ENCODE measurements at regions of chr6 and their contacts with region 1.

Region 1: DNA sequence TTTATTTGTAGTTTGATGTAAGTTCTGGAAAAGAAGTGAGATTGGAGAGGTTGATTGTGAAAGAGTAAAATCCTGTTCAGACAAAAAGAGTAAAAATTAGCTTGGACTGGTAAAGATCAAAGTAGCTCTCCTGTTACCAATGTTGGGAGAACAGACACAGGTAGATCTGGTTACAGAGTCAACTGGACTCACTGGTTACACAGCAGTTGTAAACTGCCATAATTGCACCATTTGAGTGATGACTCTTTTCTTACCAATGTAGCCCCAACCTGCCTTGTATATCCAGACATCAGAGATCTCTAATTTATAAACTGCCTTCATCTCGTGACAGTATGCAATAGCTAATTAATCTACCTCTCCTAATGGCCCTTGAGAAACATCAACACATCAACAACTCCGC is 165.6 kb upstream of the PRSS16 start:
- DNase-seq: no peak
- H3K4me3 ChIP-seq: no peak overlapping the region
- H3K27ac ChIP-seq: no peak overlapping the region
- H3K4me1 ChIP-seq: peaks cover 0 to 7% (median 6%) of the 10 kb centered on the region in 6 donors
- H3K27me3 ChIP-seq: peaks cover 0 to 61% (median 2%) of the 10 kb centered on the region in 7 donors
- CTCF ChIP-seq: no peak
- POLR2A ChIP-seq: no peak

Region 2: DNA sequence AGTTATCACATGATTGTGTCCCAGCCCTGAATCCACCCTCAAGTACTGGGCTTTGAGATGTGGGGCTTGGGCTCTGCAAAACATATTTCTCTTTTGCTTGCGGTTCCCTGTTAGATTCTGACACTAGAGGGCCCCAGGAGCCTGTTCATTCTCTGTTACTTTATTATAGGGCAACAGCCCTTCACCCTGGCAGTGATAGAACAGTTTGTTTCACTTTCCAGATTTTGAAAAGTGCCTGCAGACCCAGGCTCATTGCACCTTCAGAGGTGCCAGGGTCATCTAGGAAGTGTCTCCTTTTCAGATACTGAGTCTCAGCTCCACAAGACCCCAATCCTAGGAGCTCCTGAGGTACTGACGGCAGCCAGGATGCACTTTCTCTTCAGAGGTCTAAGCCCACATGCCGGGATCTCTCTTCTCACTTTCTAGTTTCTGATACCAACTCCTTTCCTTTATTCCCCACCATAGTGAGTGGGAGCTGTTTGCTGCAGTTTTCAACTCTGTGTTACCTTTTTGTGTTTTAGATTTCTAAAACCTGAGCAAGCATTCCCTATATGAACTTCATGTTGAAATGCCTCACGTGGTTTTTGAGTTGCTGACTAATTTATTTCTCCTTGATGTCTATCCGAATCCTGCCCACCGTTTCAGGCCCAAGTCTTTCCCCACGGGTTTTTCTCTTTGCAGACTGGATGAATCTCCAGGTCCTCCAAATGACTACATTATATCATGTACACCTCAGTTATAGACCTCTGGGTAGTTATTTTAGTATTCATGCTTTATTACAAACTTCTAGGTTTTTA is 474.3 kb before region 1 on chr6:
- intact Hi-C with region 1: loop called (anchors 5 kb)
- DNase-seq: no peak
- H3K4me3 ChIP-seq: peak overlapping the region in 3 of 8 donors; percentile 13 to 47 (median 17)
- H3K27ac ChIP-seq: peak overlapping the region in 1 of 8 donors; percentile 34
- H3K4me1 ChIP-seq: peaks cover 0 to 9% (median 3%) of the 10 kb centered on the region in 6 donors
- H3K27me3 ChIP-seq: peaks cover 0 to 12% (median 0%) of the 10 kb centered on the region in 7 donors
- CTCF ChIP-seq: peak in 10 of 11 experiments; percentile 37 to 73 (median 62)
- POLR2A ChIP-seq: no peak

Region 3: DNA sequence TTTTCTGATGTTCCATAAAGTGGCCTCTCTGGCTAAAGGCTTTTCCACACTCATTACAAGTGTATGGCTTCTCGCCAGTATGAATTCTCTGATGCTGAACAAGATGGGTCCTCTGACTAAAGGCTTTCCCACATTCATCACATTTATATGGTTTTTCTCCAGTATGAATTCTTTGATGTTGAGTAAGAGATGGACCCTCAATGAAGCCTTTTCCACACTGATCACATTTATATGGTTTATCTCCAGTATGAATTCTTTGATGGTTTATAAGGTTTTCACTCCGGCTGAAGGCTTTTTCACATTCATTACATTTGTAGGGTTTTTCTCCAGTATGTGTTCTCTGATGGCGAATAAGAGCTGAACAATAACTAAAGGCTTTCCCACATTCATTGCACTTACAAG is 370.6 kb after region 1 on chr6:
- intact Hi-C with region 1: no loop called
- DNase-seq: no peak
- H3K4me3 ChIP-seq: peak overlapping the region in 1 of 8 donors; percentile 14
- H3K27ac ChIP-seq: no peak overlapping the region
- H3K4me1 ChIP-seq: no peaks in the 10 kb centered on the region
- H3K27me3 ChIP-seq: no peaks in the 10 kb centered on the region
- CTCF ChIP-seq: no peak
- POLR2A ChIP-seq: no peak